Dorsolateral prefrontal cortex (tissue), 120 donors: ENCODE measurements at regions of chr9 and their contacts with region 1.

Region 1: DNA sequence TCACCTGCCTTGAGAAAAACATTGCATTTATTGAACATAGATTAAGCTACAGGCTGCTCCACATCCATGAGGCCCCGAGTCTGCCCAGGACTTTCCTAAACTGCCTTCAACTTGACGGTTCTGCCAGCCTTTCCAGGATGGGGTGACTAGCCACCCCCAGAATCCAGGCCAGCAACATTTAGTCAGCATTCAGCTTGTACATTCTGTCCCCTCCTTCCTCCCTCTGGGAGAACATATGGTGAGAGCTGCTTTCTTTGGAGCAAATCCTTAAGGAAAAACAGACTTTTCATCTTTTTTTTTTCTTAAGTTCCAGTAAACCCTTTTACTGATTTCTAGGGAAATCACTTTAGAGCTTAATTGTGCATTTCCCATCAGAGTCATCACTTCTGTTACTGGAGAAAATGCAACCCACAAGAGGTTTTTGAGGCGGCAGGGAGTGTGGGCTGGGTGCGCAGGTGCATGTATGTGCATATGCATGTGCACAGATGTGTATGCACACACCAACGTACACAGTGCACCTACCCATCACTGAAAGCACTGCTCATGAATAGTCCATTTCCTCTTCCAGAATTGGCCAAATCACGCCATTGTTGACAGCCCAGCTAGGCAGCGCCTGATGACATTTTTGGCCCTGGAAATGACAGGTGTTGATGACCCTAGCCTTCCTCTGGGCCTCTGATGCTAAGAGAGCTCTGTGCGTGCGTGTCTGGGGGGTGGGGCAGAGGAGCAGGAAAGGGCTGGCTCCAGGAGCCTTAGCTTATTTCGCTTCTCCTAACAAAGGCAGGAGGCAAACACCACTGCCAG is 145.6 kb downstream of the HSD17B3 start:
- DNase-seq: peak in 5 of 10 donors; percentile 35 to 66 (median 54)
- H3K4me3 ChIP-seq: no peak overlapping the region
- H3K27ac ChIP-seq: peak overlapping the region in 46 of 59 donors; percentile 3 to 84 (median 62)
- H3K27me3 ChIP-seq: no peaks in the 10 kb centered on the region
- CTCF ChIP-seq: no peak

Region 2: DNA sequence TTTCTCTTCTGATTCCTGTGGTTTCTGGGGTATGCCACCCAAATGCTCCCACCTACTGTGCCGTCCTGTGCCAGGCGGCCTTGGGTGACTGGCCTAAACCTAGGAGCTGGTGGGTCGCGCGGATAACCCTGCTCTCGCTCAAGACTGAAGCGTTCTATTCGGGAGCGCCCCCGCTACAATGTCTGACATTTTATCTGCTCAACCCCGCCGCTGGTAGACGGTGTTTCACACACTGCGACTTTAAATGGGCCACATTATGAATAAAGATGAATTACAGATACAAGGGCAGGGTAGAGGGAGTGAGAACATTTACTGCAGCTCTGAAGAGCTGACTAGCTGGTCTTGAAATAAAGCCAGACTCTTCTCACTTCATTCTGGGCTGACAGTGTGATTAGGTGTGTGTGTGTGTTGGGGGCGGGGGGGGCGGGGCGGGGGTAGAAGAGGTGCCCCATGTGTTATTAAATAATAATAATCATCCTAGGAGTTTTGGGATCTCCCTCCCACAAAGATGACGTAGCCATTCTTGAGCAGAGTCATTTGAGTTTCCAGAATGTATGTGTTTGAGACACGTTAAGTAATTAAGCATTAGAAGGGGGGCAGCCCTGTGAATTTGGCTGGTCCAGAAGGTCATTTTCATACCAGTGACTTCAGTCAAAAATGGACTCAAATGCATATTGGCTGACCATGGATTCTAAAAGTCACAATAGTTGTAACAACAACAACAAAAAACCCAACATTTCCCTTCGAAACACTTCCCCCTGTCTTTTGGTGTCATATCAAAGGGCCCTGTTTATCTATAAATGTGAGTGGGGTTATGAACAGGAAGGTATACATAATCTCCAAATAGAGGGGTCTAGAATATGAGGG is 638.6 kb before region 1 on chr9:
- intact Hi-C with region 1: no loop called
- DNase-seq: peak in 1 of 10 donors; percentile 54
- H3K4me3 ChIP-seq: peak overlapping the region; percentile 50 to 82 (median 69)
- H3K27ac ChIP-seq: peak overlapping the region in 53 of 59 donors; percentile 6 to 84 (median 63)
- H3K27me3 ChIP-seq: no peaks in the 10 kb centered on the region
- CTCF ChIP-seq: no peak

Region 3: DNA sequence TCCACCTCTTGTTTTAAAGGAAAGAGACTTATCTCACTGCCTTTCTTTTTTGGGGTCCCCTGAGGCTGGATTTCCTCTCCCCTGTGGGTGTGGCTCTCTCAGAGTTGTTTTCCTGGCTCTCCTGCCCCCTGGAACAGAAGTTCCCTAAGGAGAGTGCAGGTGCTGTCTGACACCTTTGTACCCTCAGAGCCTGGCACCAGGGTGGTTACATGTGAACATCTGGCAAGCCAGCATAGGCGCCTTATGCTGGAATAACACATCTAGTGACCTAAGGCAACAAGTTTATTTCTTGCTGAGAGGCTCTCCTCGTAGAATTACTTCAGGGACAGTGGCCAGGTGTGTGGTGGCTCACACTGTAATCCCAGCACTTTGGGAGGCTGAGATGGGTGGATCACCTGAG is 466.7 kb before region 1 on chr9:
- intact Hi-C with region 1: no loop called
- DNase-seq: no peak
- H3K4me3 ChIP-seq: no peak overlapping the region
- H3K27ac ChIP-seq: no peak overlapping the region
- H3K27me3 ChIP-seq: no peaks in the 10 kb centered on the region
- CTCF ChIP-seq: no peak

Region 4: GRCh38 chr9:96139592-96140295 is 16.6 kb before region 1 on chr9:
- intact Hi-C with region 1: loop called in 1 of 2 experiments (anchors 1 kb)
- DNase-seq: peak in 8 of 10 donors; percentile 27 to 72 (median 54)
- H3K4me3 ChIP-seq: peak overlapping the region in 5 of 59 donors; percentile 3 to 44 (median 28)
- H3K27ac ChIP-seq: peak overlapping the region in 55 of 59 donors; percentile 15 to 98 (median 83)
- H3K27me3 ChIP-seq: no peaks in the 10 kb centered on the region
- CTCF ChIP-seq: no peak

Region 5: DNA sequence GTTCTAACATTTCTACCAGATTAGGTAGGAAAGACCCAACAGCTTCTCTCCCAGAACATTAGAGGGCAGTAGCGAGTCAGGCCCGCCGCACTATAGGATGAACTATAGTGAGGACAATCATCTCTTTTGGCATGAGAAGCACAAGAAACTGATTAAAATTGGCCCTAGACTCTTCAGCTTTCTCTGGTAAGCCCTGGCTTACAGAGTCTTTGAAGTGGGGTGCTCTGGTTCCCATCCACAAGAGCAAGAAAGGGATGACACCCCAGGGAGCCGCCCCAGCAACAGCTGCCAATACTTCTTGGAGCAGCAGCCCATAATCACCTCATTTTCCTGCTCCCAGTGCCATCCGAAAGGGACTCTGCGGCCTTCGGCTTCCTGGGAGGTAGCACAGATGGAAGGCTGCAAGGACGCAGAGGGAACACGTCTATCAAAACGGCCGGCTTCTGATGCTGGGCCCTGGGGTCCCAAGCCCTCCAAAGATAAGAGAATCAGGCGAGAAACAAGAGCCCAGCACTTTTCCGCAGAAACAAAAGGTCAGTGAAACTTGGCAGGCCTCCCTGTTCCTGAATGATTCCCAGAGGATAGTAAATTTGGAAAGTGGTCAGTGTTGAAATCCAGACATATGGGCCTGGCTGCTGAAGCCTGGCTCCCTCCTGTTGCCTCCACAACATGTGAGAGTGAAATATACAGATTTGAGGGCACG is 76.3 kb after region 1 on chr9:
- intact Hi-C with region 1: no loop called
- DNase-seq: peak in 2 of 10 donors; percentile 49 to 73
- H3K4me3 ChIP-seq: no peak overlapping the region
- H3K27ac ChIP-seq: peak overlapping the region in 19 of 59 donors; percentile 12 to 83 (median 40)
- H3K27me3 ChIP-seq: no peaks in the 10 kb centered on the region
- CTCF ChIP-seq: peak; percentile 61 to 92 (median 80)

Region 6: GRCh38 chr9:96555567-96556386 is 399.4 kb after region 1 on chr9:
- intact Hi-C with region 1: no loop called
- DNase-seq: no peak
- H3K4me3 ChIP-seq: peak overlapping the region in 16 of 59 donors; percentile 0 to 41 (median 11)
- H3K27ac ChIP-seq: peak overlapping the region in 58 of 59 donors; percentile 4 to 95 (median 88)
- H3K27me3 ChIP-seq: no peaks in the 10 kb centered on the region
- CTCF ChIP-seq: no peak